AG04450 (cell line): ENCODE measurements at regions of chr12 and their contacts with region 1.

Region 1: DNA sequence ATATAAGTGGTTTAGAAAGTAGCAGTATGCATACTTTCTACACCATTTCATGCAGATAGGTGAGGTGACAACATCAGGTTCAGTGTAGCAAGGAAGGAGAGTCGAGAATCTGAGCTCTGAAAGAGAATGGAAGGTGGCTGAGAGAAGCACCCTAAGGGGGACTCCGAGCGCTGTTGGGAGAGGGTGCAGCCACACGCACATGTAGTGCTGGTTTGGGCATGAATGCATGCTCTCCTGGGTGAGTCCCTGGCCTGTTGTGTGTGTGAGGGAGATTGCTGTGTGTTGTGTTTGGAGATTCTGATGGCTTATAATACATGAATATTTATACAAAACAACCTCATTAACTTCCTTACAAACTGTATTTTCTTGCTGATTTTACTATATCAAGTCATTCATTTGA is 180.3 kb upstream of the LRIG3 start:
- DNase-seq: no peak
- H3K4me3 ChIP-seq: no peak overlapping the region
- H3K27ac ChIP-seq: no peak overlapping the region
- H3K27me3 ChIP-seq: no peaks in the 10 kb centered on the region
- CTCF ChIP-seq: no peak

Region 2: DNA sequence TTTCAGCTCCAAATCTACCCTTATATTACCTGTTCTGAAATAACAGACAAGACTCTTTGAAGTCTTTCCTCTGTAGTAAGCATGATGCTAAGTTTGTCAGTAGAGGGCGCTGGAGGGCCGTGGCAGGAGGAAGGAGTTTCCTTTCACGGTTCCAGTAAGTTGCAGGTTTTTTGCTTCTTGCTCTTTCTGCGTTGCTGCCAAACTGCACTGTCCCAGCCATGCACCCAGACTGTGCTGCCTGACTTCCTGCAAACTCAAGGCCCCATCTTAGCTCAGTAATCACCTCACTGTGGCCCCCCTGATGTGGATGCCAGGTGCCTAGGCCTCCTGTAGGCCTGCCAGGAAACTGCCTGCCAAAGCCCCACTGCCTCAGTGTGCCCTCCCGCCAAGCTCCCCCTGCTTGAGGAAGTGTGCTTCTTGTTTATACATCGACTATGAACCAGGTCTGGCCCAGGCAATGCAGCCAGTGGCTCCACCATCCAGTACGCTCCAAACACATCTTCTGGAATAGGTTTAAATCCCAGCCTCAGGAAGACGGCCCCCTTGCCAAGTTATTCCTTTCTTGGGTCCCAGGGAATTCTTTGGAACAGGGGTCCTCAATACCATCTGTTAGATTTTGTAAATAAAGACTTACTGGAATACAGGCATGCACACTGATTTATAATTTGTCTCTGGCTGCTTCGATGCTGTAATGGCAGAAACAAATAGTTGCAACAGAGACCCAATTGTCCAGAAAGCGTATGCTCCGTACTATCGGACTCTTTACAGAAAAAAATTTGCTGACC is 13.4 kb after region 1 on chr12:
- CTCF ChIA-PET with region 1: interaction called, 23 read pairs
- POLR2A ChIA-PET with region 1: no interaction called
- DNase-seq: peak; percentile 69
- H3K4me3 ChIP-seq: no peak overlapping the region
- H3K27ac ChIP-seq: no peak overlapping the region
- H3K27me3 ChIP-seq: no peaks in the 10 kb centered on the region
- CTCF ChIP-seq: peak; percentile 98